ENCODE measurements at regions of chr6 and their contacts with region 1.

Region 1: GRCh38 chr6:34986845-34987246 is 97.8 kb downstream of the ANKS1A start:
- DNase-seq: peak; percentile 63 to 68 (median 65)
- ATAC-seq: peak; percentile 76 to 81
- H3K4me3 ChIP-seq: no peak overlapping the region
- H3K27ac ChIP-seq: no peak overlapping the region
- H3K4me1 ChIP-seq: peaks cover 4% of the 10 kb centered on the region
- H3K27me3 ChIP-seq: no peaks in the 10 kb centered on the region

Region 2: GRCh38 chr6:34644716-34645115 is 342.1 kb before region 1 on chr6:
- intact Hi-C with region 1: no loop called
- DNase-seq: no peak
- ATAC-seq: no peak
- H3K4me3 ChIP-seq: no peak overlapping the region
- H3K27ac ChIP-seq: no peak overlapping the region
- H3K4me1 ChIP-seq: no peaks in the 10 kb centered on the region
- H3K27me3 ChIP-seq: no peaks in the 10 kb centered on the region

Region 3: GRCh38 chr6:34867484-34867883 is 119.4 kb before region 1 on chr6:
- intact Hi-C with region 1: no loop called
- DNase-seq: no peak
- ATAC-seq: peak; percentile 22 to 51
- H3K4me3 ChIP-seq: no peak overlapping the region
- H3K27ac ChIP-seq: peak overlapping the region; percentile 85
- H3K4me1 ChIP-seq: no peaks in the 10 kb centered on the region
- H3K27me3 ChIP-seq: no peaks in the 10 kb centered on the region

Region 4: GRCh38 chr6:35139908-35140655 is 153.2 kb after region 1 on chr6:
- intact Hi-C with region 1: loop called (anchors 2 to 5 kb)
- DNase-seq: peak in 2 of 3 donors; percentile 38 to 55
- ATAC-seq: peak; percentile 39 to 58
- H3K4me3 ChIP-seq: no peak overlapping the region
- H3K27ac ChIP-seq: no peak overlapping the region
- H3K4me1 ChIP-seq: no peaks in the 10 kb centered on the region
- H3K27me3 ChIP-seq: no peaks in the 10 kb centered on the region

Region 5: GRCh38 chr6:35213824-35214756 is 227.2 kb after region 1 on chr6 and contains the start of gene SCUBE3:
- intact Hi-C with region 1: loop called in 1 of 4 experiments (anchors 10 kb)
- DNase-seq: peak; percentile 28 to 69 (median 67)
- ATAC-seq: peak; percentile 40 to 48
- H3K4me3 ChIP-seq: peak within 1 kb of the TSS; percentile 57
- H3K27ac ChIP-seq: no peak within 1 kb of the TSS
- H3K4me1 ChIP-seq: peaks cover 2% of the 10 kb centered on the region
- H3K27me3 ChIP-seq: no peaks in the 10 kb centered on the region
- total RNA-seq, gene SCUBE3: 0.25 to 0.86 (median 0.49) TPM

Region 6: DNA sequence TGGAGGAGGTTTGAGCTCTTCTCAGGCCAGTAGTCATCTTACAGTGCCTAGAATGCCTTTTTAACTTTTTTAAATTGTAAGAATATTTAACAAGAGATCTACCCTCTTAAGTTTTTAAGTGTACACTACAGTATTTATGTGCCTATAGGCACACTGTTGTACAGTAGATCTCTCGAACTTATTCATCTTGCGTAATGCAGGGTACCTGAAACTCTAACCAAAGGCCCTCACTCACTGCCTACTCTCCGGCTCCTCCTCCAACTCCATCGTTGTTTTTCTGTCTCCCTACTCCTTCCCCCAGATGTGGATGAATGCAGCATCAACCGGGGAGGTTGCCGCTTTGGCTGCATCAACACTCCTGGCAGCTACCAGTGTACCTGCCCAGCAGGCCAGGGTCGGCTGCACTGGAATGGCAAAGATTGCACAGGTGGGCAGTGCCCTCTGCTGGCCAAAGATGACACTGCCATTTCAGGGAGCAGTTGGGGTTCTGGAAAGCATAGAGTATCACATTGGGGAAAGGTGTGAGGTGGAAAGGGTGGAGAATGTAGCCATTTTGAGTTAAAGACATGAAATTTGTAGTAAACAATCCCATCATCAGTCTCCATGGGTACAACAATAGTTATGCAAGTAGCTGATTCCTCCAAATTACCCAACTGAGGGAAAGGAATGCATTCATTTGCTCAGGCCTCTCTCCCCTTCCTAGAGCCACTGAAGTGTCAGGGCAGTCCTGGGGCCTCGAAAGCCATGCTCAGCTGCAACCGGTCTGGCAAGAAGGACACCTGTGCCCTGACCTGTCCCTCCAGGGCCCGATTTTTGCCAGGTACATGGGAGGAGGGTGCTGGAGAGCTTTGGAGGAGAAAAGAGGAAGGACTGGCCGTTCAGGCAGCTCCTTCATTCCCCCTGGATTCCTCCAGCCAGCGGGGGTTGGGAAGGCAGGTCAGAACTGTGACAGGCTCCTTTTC is 254.3 kb after region 1 on chr6:
- intact Hi-C with region 1: loop called in 2 of 4 experiments (anchors 5 to 10 kb)
- DNase-seq: peak; percentile 61 to 85 (median 85)
- ATAC-seq: peak; percentile 30 to 61
- H3K4me3 ChIP-seq: no peak overlapping the region
- H3K27ac ChIP-seq: no peak overlapping the region
- H3K4me1 ChIP-seq: peaks cover 6% of the 10 kb centered on the region
- H3K27me3 ChIP-seq: no peaks in the 10 kb centered on the region

Measured in right cardiac atrium (tissue), 5 donors.